Sciatic nerve (tissue), 2 donors: ENCODE measurements at regions of chr7 and their contacts with region 1.

Region 1: GRCh38 chr7:99822731-99823718 is 4.8 kb upstream of the CYP3A43 start:
- DNase-seq: no peak
- ATAC-seq: no peak

Region 2: GRCh38 chr7:99408379-99409191 is 414.4 kb before region 1 on chr7 and contains the starts of genes BUD31 and PDAP1:
- intact Hi-C with region 1: loop called (anchors 5 kb)
- DNase-seq: peak; percentile 95
- ATAC-seq: peak; percentile 97
- total RNA-seq, gene BUD31: 59.2 TPM
- total RNA-seq, gene PDAP1: 76.1 TPM

Region 3: DNA sequence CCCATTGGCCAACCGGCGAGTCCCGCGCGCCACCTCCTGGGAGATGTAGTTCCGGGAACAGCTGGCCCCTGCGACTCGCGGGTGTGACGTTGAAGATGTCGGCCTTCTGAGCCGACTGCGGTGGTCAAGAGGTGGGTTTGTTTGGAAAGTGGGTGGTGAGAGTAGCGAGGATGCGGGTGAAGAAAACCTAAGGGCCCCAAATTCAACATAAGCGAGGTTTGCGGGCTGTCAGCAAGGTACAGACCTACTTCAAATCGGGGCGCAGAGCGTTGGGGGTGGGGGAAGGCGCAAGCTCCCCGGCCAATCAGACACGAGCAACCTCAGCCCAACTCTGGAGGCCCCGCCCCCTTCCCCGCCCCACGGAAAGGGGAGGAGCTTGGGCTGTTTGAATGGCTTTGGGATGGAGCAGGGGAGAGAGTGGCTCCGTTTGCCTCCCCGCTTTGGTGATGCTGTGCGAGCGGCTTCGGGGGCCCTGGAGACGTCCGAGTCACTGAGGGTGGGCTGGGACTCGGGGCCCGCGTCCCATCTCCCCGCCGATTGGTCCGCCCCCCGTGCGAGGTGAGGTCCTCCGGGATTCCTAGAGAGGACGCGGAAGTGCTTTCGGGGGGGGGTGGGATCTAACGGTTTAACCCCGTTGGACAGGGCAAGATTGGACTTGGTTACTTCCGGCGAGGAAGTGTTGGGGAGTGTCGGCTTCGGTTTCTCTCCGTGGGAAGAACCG is 318.3 kb before region 1 on chr7 and contains the start of gene ZKSCAN5:
- intact Hi-C with region 1: loop called (anchors 5 kb)
- DNase-seq: peak; percentile 99
- ATAC-seq: peak; percentile 97
- total RNA-seq, gene ZKSCAN5: 10.0 TPM

Region 4: DNA sequence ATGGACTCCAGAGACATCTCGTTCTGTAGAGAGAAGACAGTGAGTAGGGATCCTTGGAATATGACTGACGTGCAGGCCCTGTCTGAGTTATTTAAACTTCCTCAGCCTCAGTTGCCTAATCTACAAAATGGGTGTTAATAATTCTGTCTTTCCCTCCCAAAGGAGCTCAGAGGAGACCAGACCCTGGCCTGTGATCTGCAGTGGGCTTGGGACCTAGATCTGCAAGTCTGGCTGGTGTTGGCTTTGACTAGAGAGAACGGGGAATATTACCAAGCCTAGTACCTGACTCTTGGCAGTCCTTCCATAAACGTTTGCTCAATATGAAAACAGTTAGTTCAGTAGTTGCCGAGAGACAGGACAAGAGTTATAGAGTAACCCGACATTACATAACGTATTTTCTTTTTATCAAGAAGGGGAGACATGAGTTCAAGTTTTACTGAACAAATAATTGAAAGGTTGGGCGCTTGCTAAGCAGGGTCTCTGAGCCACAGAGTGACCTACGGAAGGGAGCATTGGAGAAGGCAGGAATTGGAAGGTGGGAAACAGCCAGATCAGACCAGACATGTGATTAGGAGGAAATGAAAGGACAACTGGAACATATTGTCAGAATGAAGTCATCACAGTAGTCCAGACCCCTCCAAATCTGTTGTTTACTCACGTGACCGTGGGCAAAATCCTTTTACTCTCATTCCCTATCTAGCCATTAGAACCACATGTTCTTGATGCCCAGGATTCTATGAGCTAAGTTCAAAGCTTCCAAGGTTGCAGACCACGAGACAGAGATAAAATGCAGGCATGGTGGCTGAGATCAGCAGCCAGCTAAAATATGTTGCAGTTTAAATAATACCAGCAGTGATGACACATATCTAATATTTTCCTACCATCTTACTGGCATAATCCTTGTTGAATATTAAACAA is 28.2 kb before region 1 on chr7:
- intact Hi-C with region 1: no loop called
- DNase-seq: no peak
- ATAC-seq: no peak